Ovary (tissue), 10 donors: ENCODE measurements at regions of chr2 and their contacts with region 1.

Region 1: GRCh38 chr2:54704688-54705605 is 18.5 kb upstream of the EML6 start:
- DNase-seq: no peak
- H3K4me3 ChIP-seq: no peak overlapping the region
- H3K27ac ChIP-seq: no peak overlapping the region
- H3K4me1 ChIP-seq: no peaks in the 10 kb centered on the region
- H3K27me3 ChIP-seq: no peaks in the 10 kb centered on the region
- CTCF ChIP-seq: peak; percentile 53 to 73 (median 55)
- EP300 ChIP-seq: no peak
- POLR2A ChIP-seq: no peak

Region 2: GRCh38 chr2:54106631-54107454 is 598.1 kb before region 1 on chr2:
- intact Hi-C with region 1: loop called in 1 of 4 experiments (anchors 10 kb)
- DNase-seq: peak in 2 of 5 donors; percentile 30 to 32
- H3K4me3 ChIP-seq: no peak overlapping the region
- H3K27ac ChIP-seq: no peak overlapping the region
- H3K4me1 ChIP-seq: no peaks in the 10 kb centered on the region
- H3K27me3 ChIP-seq: no peaks in the 10 kb centered on the region
- CTCF ChIP-seq: peak in 2 of 3 donors; percentile 54 to 57
- EP300 ChIP-seq: no peak
- POLR2A ChIP-seq: no peak

Region 3: GRCh38 chr2:54531558-54531957 is 173.4 kb before region 1 on chr2:
- intact Hi-C with region 1: loop called in 1 of 4 experiments (anchors 10 kb)
- DNase-seq: no peak
- H3K4me3 ChIP-seq: no peak overlapping the region
- H3K27ac ChIP-seq: no peak overlapping the region
- H3K4me1 ChIP-seq: peaks cover 3% of the 10 kb centered on the region
- H3K27me3 ChIP-seq: no peaks in the 10 kb centered on the region
- CTCF ChIP-seq: no peak
- EP300 ChIP-seq: no peak
- POLR2A ChIP-seq: no peak